ENCODE measurements at regions of chr3 and their contacts with region 1.

Region 1: DNA sequence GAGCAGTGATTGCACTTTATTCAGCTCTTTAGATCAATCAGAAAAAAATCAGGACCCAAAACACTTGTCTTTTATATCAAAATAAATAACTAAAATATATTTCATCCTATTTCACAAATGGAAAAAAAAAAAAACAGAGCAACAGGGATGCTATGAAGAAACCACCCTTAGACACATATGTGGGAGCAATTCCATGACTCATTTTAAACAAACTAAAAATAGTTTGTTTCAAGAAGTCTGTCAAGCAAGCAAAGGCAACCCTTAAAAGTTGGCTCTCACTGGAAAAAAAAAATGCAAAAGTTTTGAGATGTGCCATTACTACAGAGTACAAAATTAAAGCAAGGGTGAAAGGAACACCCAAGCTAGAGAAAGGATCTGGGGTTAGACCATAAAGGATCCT is 5.7 kb downstream of the ATP13A3 start:
- DNase-seq: peak; percentile 45
- H3K4me3 ChIP-seq: no peak overlapping the region
- H3K27ac ChIP-seq: peak overlapping the region; percentile 16
- H3K4me1 ChIP-seq: peaks cover 16% of the 10 kb centered on the region
- H3K27me3 ChIP-seq: no peaks in the 10 kb centered on the region
- CTCF ChIP-seq: no peak

Region 2: GRCh38 chr3:194583604-194584318 is 102.7 kb after region 1 on chr3:
- CTCF ChIA-PET with region 1: no interaction called
- dilution Hi-C with region 1: loop called (anchors 5 kb)
- in situ Hi-C with region 1: loop called in 1 of 2 experiments (anchors 5 kb)
- intact Hi-C with region 1: no loop called
- DNase-seq: peak; percentile 86
- H3K4me3 ChIP-seq: peak overlapping the region; percentile 85 to 88 (median 87)
- H3K27ac ChIP-seq: peak overlapping the region; percentile 82
- H3K4me1 ChIP-seq: peaks cover 5% of the 10 kb centered on the region
- H3K27me3 ChIP-seq: no peaks in the 10 kb centered on the region
- CTCF ChIP-seq: no peak

Region 3: DNA sequence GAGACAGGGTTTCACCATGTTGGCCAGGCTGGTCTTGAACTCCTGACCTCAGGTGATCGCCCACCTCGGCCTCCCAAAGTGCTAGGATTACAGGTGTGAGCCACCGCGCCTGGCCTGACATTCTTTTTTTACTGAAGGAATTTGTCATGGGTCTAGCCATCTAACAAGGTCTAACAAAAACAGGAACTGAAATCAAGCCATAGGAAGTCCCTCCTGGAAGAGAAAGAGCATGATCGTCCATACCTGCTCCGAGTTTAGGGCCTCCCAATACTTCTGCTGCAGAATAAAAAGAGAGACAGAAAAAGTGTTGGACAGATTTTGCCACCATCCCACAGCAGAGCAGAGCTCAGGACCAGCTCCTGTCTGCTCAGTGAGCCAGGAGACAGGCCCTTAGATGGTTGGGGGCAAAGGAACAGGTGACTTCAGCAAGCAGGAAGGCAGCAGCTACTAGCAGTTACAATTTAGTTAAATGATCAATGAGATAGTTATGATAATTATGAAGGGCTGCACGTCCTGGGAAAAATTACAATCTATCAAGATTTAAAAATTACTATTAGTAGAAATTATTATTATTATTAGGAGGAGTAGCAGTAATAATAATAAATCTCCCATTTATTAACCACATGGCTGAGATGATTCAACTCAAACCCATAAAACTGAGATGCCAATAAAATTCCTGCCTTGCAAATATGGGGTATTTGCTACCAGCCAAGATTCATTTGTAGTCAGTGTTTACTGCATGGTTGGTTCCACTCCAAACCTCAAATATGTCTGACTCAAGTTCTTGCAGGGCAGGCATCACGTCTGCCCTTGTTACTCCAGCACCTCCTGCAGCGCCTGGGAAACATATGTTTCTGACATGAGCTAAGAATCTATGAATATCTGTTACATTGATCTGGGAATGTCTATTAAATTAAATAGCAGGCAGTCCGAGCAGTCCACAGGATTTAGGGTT is 112.0 kb after region 1 on chr3:
- CTCF ChIA-PET with region 1: no interaction called
- dilution Hi-C with region 1: loop called (anchors 5 kb)
- in situ Hi-C with region 1: loop called (anchors 5 kb)
- intact Hi-C with region 1: loop called (anchors 1 kb)
- DNase-seq: peak; percentile 96
- H3K4me3 ChIP-seq: no peak overlapping the region
- H3K27ac ChIP-seq: no peak overlapping the region
- H3K4me1 ChIP-seq: peaks cover 13% of the 10 kb centered on the region
- H3K27me3 ChIP-seq: no peaks in the 10 kb centered on the region
- CTCF ChIP-seq: peak; percentile 18 to 47